Sigmoid colon (tissue), 7 donors: ENCODE measurements at regions of chr1 and their contacts with region 1.

Region 1: GRCh38 chr1:6794164-6794563 is 8.9 kb downstream of the CAMTA1 start:
- DNase-seq: no peak
- H3K4me3 ChIP-seq: no peak overlapping the region
- H3K27ac ChIP-seq: no peak overlapping the region
- H3K4me1 ChIP-seq: peaks cover 0 to 29% (median 19%) of the 10 kb centered on the region in 4 donors
- H3K27me3 ChIP-seq: no peaks in the 10 kb centered on the region
- CTCF ChIP-seq: peak in 3 of 4 experiments; percentile 18 to 47 (median 43)
- EP300 ChIP-seq: no peak
- POLR2A ChIP-seq: no peak

Region 2: GRCh38 chr1:6889875-6890480 is 95.8 kb after region 1 on chr1:
- intact Hi-C with region 1: loop called (anchors 2 kb)
- DNase-seq: no peak
- H3K4me3 ChIP-seq: no peak overlapping the region
- H3K27ac ChIP-seq: no peak overlapping the region
- H3K4me1 ChIP-seq: no peaks in the 10 kb centered on the region
- H3K27me3 ChIP-seq: no peaks in the 10 kb centered on the region
- CTCF ChIP-seq: peak; percentile 26 to 70 (median 58)
- EP300 ChIP-seq: no peak
- POLR2A ChIP-seq: no peak

Region 3: GRCh38 chr1:7070389-7071029 is 276.3 kb after region 1 on chr1:
- intact Hi-C with region 1: loop called (anchors 1 kb)
- DNase-seq: peak; percentile 83
- H3K4me3 ChIP-seq: peak overlapping the region in 3 of 4 donors; percentile 31 to 37 (median 33)
- H3K27ac ChIP-seq: no peak overlapping the region
- H3K4me1 ChIP-seq: peaks cover 0 to 6% (median 6%) of the 10 kb centered on the region in 4 donors
- H3K27me3 ChIP-seq: peaks cover 0 to 6% (median 0%) of the 10 kb centered on the region in 3 donors
- CTCF ChIP-seq: peak in 3 of 4 experiments; percentile 59 to 82 (median 72)
- EP300 ChIP-seq: no peak
- POLR2A ChIP-seq: no peak

Region 4: GRCh38 chr1:7218210-7218832 is 424.2 kb after region 1 on chr1:
- intact Hi-C with region 1: loop called (anchors 5 kb)
- DNase-seq: no peak
- H3K4me3 ChIP-seq: no peak overlapping the region
- H3K27ac ChIP-seq: no peak overlapping the region
- H3K4me1 ChIP-seq: peaks cover 0 to 13% (median 8%) of the 10 kb centered on the region in 4 donors
- H3K27me3 ChIP-seq: no peaks in the 10 kb centered on the region
- CTCF ChIP-seq: peak in 3 of 4 experiments; percentile 57 to 73 (median 70)
- EP300 ChIP-seq: no peak
- POLR2A ChIP-seq: no peak